ENCODE measurements at regions of chr16 and their contacts with region 1.

Region 1: DNA sequence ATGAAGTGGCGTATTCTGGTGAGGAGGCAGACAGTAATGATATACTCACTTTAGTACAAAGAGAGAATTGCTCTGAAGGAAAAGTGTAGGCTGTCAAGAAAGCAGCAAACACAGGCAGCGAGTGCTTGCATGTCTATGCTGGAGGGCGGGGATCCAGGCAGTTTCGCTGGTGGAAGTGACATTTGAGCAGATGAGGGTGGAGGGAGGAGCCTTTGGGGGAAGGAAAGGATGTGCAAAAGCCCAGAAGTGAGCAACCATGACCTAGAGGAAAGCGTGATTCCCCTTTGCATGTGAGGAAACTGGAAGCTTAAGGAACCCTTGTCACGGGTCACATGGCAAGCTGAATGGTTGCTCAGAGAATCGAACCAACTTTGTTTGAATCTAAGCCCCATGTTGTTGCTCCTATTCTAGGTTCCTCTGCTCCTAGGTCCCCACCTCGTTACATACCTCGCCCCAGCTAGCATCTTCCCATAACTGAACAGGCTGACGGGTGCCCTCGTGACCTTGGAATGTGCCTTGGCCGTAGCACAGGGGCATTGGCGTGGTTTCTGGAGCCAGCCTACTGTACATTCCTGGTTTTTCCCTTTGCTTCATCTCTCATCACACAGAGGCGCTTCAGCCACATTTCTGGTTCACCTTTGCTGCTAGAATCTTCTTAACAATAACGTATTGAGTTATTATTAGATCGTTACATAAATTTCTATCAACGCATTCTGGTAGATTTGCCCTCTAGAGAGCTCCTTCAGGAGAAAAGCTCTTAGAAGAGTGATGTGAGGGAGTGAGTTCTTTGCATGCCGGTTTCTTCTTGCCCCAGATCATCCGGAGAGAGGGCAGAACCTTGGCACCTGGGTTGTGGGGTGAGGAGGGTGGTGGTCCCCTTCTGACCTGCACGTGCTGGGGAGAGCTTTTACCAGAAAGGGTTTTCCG is 191.8 kb downstream of the SNX29 start:
- DNase-seq: no peak
- H3K4me3 ChIP-seq: no peak overlapping the region
- H3K27ac ChIP-seq: no peak overlapping the region
- H3K4me1 ChIP-seq: no peaks in the 10 kb centered on the region
- H3K27me3 ChIP-seq: no peaks in the 10 kb centered on the region
- CTCF ChIP-seq: no peak

Region 2: GRCh38 chr16:12089492-12090150 is 78.7 kb before region 1 on chr16:
- CTCF ChIA-PET with region 1: no interaction called
- dilution Hi-C with region 1: loop called (anchors 5 kb)
- in situ Hi-C with region 1: no loop called
- intact Hi-C with region 1: no loop called
- DNase-seq: no peak
- H3K4me3 ChIP-seq: no peak overlapping the region
- H3K27ac ChIP-seq: no peak overlapping the region
- H3K4me1 ChIP-seq: no peaks in the 10 kb centered on the region
- H3K27me3 ChIP-seq: no peaks in the 10 kb centered on the region
- CTCF ChIP-seq: no peak